Activated CD8-positive, alpha-beta T cell treated with anti-CD3 and anti-CD28 coated beads, Interleukin-2, amount 10 ng/mL, durations not matched to agents 7 days and 5 days (primary cell): ENCODE measurements at regions of chr20 and their contacts with region 1.

Region 1: DNA sequence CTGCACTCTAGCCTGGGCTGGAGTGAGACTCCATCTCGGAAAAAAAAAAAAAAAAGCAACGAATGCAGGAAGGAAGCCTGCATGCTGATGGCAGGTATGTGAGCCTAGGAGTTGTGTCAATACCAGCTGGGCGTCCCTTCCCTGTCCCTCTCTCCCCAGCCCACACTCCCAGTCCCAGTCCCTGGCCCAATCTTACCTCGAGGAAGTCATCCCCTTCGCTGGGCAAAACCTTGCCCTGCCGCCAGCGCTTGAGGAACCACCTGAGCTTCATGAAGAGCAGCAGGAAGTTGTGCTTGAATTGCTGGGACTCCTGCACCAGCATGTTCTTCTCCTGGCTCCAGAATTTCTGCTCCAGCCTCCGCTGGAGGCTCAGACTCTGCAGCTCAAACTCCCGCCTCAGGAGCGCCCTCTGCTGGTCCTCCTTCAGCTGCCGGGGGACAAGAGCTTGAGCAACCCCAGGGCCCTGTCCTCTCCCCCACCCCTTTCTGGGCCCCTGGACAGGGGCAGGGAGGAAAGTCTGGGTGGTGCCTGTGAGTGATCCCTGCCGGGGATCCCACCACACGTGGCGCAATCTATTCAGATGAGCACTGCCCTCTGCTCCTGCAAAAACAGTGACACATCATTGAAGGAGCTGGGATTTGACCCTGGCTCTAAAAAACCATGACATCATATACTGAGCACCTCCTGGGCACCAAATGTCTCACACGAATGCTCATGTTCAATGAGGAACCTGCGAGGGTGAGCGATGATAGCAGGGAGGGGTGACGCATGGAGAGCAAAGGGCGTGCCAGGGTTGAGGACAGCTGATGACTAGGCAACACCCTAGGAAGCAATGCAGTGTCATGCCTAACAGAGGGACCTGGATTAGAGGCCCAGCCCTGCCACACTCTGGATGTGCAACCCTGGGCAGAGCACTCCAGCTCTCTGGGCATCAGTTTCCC is 35.0 kb upstream of the DSN1 start:
- DNase-seq: peak; percentile 81
- ATAC-seq: peak; percentile 81
- H3K4me3 Mint-ChIP-seq: no peak overlapping the region
- H3K27ac Mint-ChIP-seq: no peak overlapping the region
- H3K4me1 Mint-ChIP-seq: peaks cover 14% of the 10 kb centered on the region
- H3K27me3 Mint-ChIP-seq: no peaks in the 10 kb centered on the region

Region 2: GRCh38 chr20:36666181-36666740 is 142.3 kb before region 1 on chr20:
- CTCF ChIA-PET with region 1: interaction called, 15 read pairs
- POLR2A ChIA-PET with region 1: no interaction called
- DNase-seq: no peak
- ATAC-seq: peak; percentile 61
- H3K4me3 Mint-ChIP-seq: no peak overlapping the region
- H3K27ac Mint-ChIP-seq: no peak overlapping the region
- H3K4me1 Mint-ChIP-seq: peaks cover 6% of the 10 kb centered on the region
- H3K27me3 Mint-ChIP-seq: no peaks in the 10 kb centered on the region

Region 3: GRCh38 chr20:36700438-36700837 is 108.1 kb before region 1 on chr20:
- CTCF ChIA-PET with region 1: no interaction called
- POLR2A ChIA-PET with region 1: no interaction called
- DNase-seq: no peak
- ATAC-seq: no peak
- H3K4me3 Mint-ChIP-seq: no peak overlapping the region
- H3K27ac Mint-ChIP-seq: no peak overlapping the region
- H3K4me1 Mint-ChIP-seq: no peaks in the 10 kb centered on the region
- H3K27me3 Mint-ChIP-seq: no peaks in the 10 kb centered on the region

Region 4: DNA sequence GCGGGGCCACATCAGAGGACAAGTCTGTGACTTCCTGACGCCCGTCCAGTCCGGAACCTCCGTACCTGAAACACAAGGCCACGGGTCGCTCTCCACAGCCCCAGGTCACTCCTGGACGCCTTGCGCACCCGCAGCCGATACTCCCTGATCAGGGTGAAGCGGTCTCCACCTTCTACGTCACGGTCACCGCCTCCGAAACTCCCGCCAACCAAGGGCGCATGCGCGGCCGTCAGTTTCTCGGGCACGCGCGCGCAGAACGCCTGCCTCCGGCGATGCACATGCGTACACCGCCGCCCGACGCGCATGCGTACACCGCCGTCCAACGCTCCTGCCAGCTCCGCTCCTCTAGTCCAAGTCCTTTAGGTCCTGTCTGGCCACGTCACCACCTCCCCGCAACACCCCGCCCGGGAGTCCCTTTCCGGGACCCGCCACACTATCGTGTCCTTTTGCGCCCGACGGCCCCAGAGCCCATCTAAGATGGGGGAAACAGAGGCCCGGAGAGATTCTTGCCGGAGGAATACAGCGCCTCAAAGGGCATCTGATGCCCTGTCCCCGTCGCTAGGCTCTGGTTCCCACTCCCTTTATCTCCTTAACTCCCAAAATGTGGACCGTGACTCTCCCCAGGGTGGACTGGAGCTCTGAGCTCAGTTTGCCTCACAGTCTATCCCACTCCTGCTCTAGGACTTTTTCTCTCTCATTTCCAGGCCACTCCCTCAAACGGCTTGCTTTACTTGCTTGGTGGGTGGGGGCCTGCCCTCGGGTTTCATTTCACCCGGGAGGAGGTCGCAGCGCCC is 34.8 kb before region 1 on chr20 and contains the start of gene DSN1:
- CTCF ChIA-PET with region 1: interaction called, 16 read pairs
- POLR2A ChIA-PET with region 1: interaction called, 3 read pairs
- DNase-seq: peak; percentile 98
- ATAC-seq: peak; percentile 94
- H3K4me3 Mint-ChIP-seq: peak within 1 kb of the TSS; percentile 94
- H3K27ac Mint-ChIP-seq: peak within 1 kb of the TSS; percentile 96
- H3K4me1 Mint-ChIP-seq: peaks cover 41% of the 10 kb centered on the region
- H3K27me3 Mint-ChIP-seq: peaks cover 2% of the 10 kb centered on the region
- total RNA-seq, gene DSN1: 40.2 to 41.8 TPM

Region 5: DNA sequence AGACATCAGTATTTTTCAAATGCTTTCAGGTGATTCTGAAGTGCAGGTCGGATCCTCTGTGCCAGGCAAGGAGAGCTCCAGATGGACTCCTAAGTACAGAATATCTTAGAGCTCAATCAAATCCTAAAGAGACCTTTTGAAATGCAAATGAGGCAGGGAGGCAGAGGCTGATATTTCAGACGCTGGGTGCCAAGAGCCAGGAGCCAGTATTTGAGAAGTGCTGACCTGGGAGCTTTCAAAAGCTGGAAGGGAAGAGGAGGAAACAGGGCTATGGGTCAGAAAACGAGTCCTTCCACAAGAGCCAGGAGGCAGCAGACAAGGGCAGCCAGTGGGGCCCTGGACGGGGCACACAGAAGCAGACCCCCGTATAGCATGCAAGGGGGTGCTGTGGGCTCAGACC is 11.1 kb after region 1 on chr20:
- CTCF ChIA-PET with region 1: interaction called, 15 read pairs
- POLR2A ChIA-PET with region 1: no interaction called
- DNase-seq: no peak
- ATAC-seq: no peak
- H3K4me3 Mint-ChIP-seq: no peak overlapping the region
- H3K27ac Mint-ChIP-seq: no peak overlapping the region
- H3K4me1 Mint-ChIP-seq: peaks cover 7% of the 10 kb centered on the region
- H3K27me3 Mint-ChIP-seq: no peaks in the 10 kb centered on the region

Region 6: GRCh38 chr20:36835453-36836198 is 27.0 kb after region 1 on chr20:
- CTCF ChIA-PET with region 1: interaction called, 21 read pairs
- POLR2A ChIA-PET with region 1: interaction called, 3 read pairs
- DNase-seq: peak; percentile 94
- ATAC-seq: peak; percentile 97
- H3K4me3 Mint-ChIP-seq: peak overlapping the region; percentile 84
- H3K27ac Mint-ChIP-seq: peak overlapping the region; percentile 91
- H3K4me1 Mint-ChIP-seq: peaks cover 39% of the 10 kb centered on the region
- H3K27me3 Mint-ChIP-seq: no peaks in the 10 kb centered on the region

Region 7: GRCh38 chr20:36861875-36862801 is 53.6 kb after region 1 on chr20:
- CTCF ChIA-PET with region 1: interaction called, 12 read pairs
- POLR2A ChIA-PET with region 1: interaction called, 3 read pairs
- DNase-seq: no peak
- ATAC-seq: no peak
- H3K4me3 Mint-ChIP-seq: peak overlapping the region; percentile 49
- H3K27ac Mint-ChIP-seq: no peak overlapping the region
- H3K4me1 Mint-ChIP-seq: peaks cover 15% of the 10 kb centered on the region
- H3K27me3 Mint-ChIP-seq: peaks cover 24% of the 10 kb centered on the region